CD8-positive, alpha-beta T cell (primary cell): ENCODE measurements at regions of chr11 and their contacts with region 1.

Region 1: GRCh38 chr11:59680287-59681154 is 11.7 kb upstream of the PATL1 start:
- DNase-seq: peak; percentile 23 to 75 (median 54)
- ATAC-seq: peak; percentile 91
- H3K4me3 ChIP-seq: no peak overlapping the region
- H3K4me3 Mint-ChIP-seq: no peak overlapping the region
- H3K27ac ChIP-seq: no peak overlapping the region
- H3K27ac Mint-ChIP-seq: no peak overlapping the region
- H3K4me1 ChIP-seq: no peaks in the 10 kb centered on the region
- H3K4me1 Mint-ChIP-seq: no peaks in the 10 kb centered on the region
- H3K27me3 ChIP-seq: no peaks in the 10 kb centered on the region
- H3K27me3 Mint-ChIP-seq: peaks cover 19% of the 10 kb centered on the region
- CTCF ChIP-seq: peak; percentile 41

Region 2: GRCh38 chr11:59534676-59535075 is 145.8 kb before region 1 on chr11:
- CTCF ChIA-PET with region 1: interaction called, 13 read pairs
- POLR2A ChIA-PET with region 1: no interaction called
- intact Hi-C with region 1: loop called (anchors 1 to 5 kb)
- DNase-seq: no peak
- ATAC-seq: no peak
- H3K4me3 ChIP-seq: no peak overlapping the region
- H3K4me3 Mint-ChIP-seq: no peak overlapping the region
- H3K27ac ChIP-seq: no peak overlapping the region
- H3K27ac Mint-ChIP-seq: no peak overlapping the region
- H3K4me1 ChIP-seq: peaks cover 7% of the 10 kb centered on the region
- H3K4me1 Mint-ChIP-seq: peaks cover 8% of the 10 kb centered on the region
- H3K27me3 ChIP-seq: no peaks in the 10 kb centered on the region
- H3K27me3 Mint-ChIP-seq: peaks cover 5% of the 10 kb centered on the region
- CTCF ChIP-seq: no peak

Region 3: GRCh38 chr11:59545179-59546020 is 135.1 kb before region 1 on chr11:
- CTCF ChIA-PET with region 1: interaction called, 10 read pairs
- POLR2A ChIA-PET with region 1: no interaction called
- intact Hi-C with region 1: no loop called
- DNase-seq: no peak
- ATAC-seq: no peak
- H3K4me3 ChIP-seq: no peak overlapping the region
- H3K4me3 Mint-ChIP-seq: no peak overlapping the region
- H3K27ac ChIP-seq: no peak overlapping the region
- H3K27ac Mint-ChIP-seq: no peak overlapping the region
- H3K4me1 ChIP-seq: peaks cover 4% of the 10 kb centered on the region
- H3K4me1 Mint-ChIP-seq: peaks cover 8% of the 10 kb centered on the region
- H3K27me3 ChIP-seq: no peaks in the 10 kb centered on the region
- H3K27me3 Mint-ChIP-seq: no peaks in the 10 kb centered on the region
- CTCF ChIP-seq: no peak

Region 4: DNA sequence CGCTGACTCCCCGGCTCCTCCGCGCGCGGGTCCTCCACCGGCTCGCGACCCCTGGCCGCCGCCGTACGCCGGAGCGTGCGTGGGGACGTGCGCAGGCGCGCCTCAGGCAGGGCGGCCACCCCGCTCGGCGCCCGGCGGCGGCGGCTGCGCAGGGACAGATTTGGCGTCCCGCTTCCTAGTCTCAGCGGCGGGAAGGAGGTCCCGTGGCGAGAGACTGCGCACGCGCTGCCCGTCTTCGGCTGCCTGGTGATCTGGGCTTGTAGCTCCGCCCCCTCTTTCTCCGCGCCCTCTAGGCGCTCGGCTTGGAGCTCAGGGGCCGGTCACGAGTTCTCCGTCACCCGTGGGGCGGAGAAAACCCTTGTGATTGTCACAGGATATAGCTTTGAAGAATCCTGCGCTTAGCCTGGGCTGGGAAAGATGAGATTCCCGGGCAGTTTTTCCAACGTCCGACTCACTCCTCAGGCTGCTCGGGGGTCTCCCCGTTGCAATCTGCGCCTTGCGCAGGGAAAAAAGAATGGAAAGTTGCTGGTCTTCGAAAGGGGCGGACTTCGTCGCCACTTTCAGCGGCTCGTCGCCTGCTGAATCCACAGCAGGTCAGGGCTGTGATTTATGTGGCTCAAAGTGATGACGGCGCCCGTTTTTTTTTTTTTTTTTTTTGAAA is 11.4 kb before region 1 on chr11 and contains the start of gene PATL1:
- CTCF ChIA-PET with region 1: interaction called, 12 read pairs
- POLR2A ChIA-PET with region 1: interaction called, 3 read pairs
- intact Hi-C with region 1: no loop called
- DNase-seq: peak; percentile 98 to 100 (median 99)
- ATAC-seq: peak; percentile 88
- H3K4me3 ChIP-seq: peak within 1 kb of the TSS; percentile 79 to 98
- H3K4me3 Mint-ChIP-seq: peak within 1 kb of the TSS; percentile 98
- H3K27ac ChIP-seq: peak within 1 kb of the TSS; percentile 98 to 99
- H3K27ac Mint-ChIP-seq: peak within 1 kb of the TSS; percentile 100
- H3K4me1 ChIP-seq: peaks cover 22% of the 10 kb centered on the region
- H3K4me1 Mint-ChIP-seq: peaks cover 43% of the 10 kb centered on the region
- H3K27me3 ChIP-seq: no peaks in the 10 kb centered on the region
- H3K27me3 Mint-ChIP-seq: no peaks in the 10 kb centered on the region
- CTCF ChIP-seq: no peak
- total RNA-seq, gene PATL1: 59.5 to 59.6 TPM

Region 5: GRCh38 chr11:59706518-59707285 is 26.2 kb after region 1 on chr11:
- CTCF ChIA-PET with region 1: no interaction called
- POLR2A ChIA-PET with region 1: no interaction called
- intact Hi-C with region 1: no loop called
- DNase-seq: no peak
- ATAC-seq: no peak
- H3K4me3 ChIP-seq: no peak overlapping the region
- H3K4me3 Mint-ChIP-seq: no peak overlapping the region
- H3K27ac ChIP-seq: no peak overlapping the region
- H3K27ac Mint-ChIP-seq: no peak overlapping the region
- H3K4me1 ChIP-seq: no peaks in the 10 kb centered on the region
- H3K4me1 Mint-ChIP-seq: no peaks in the 10 kb centered on the region
- H3K27me3 ChIP-seq: no peaks in the 10 kb centered on the region
- H3K27me3 Mint-ChIP-seq: peaks cover 36% of the 10 kb centered on the region
- CTCF ChIP-seq: no peak

Region 6: DNA sequence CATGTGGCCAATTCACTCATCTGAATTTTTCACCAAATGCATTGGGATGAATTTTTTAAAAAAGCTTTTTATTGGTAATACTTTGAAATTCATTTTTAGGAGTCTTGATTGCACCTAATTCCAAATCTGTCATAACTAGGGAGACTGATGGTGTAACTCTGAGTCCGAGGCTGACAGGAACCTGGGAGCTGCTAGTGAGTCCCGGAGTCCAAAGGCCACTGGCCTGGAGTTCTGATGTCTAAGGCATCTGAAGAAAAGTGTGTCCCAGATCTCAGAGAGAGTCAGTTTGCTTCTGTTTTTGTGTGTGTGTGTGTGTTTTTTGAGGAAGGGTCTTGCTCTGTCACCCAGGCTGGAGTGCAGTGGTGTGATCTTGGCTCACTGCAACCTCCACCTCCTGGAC is 50.6 kb after region 1 on chr11:
- CTCF ChIA-PET with region 1: no interaction called
- POLR2A ChIA-PET with region 1: no interaction called
- intact Hi-C with region 1: no loop called
- DNase-seq: no peak
- ATAC-seq: no peak
- H3K4me3 ChIP-seq: no peak overlapping the region
- H3K4me3 Mint-ChIP-seq: no peak overlapping the region
- H3K27ac ChIP-seq: no peak overlapping the region
- H3K27ac Mint-ChIP-seq: no peak overlapping the region
- H3K4me1 ChIP-seq: no peaks in the 10 kb centered on the region
- H3K4me1 Mint-ChIP-seq: no peaks in the 10 kb centered on the region
- H3K27me3 ChIP-seq: no peaks in the 10 kb centered on the region
- H3K27me3 Mint-ChIP-seq: peaks cover 2% of the 10 kb centered on the region
- CTCF ChIP-seq: no peak

Region 7: DNA sequence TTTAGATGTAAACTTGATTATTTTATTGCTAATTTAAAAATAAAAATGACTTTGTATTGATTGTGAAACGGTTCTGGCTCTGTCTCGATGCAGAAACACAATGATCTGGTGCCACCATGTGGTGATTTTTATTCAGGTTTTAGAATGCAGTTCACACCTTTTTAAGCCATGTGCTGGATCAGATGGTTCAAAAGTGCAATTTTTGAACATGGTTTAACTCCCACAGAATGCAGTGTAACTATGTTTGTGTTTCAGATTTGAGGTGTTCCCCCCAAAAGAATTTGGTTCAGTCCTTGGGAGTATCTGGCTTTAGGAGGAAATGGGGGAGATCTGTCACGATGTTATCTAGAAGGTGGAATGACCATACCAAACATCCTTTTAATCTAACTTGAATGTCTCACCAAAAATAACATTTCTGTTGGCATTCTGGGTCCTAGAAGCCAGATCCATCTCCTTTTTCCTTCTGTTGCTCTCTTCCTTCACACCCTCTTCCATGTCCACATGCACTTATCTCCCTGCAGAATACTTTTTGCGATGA is 122.2 kb after region 1 on chr11:
- CTCF ChIA-PET with region 1: interaction called, 3 read pairs
- POLR2A ChIA-PET with region 1: interaction called, 3 read pairs
- intact Hi-C with region 1: loop called in 1 of 2 experiments (anchors 5 kb)
- DNase-seq: peak in 6 of 9 experiments; percentile 26 to 78 (median 42)
- ATAC-seq: peak; percentile 70
- H3K4me3 ChIP-seq: no peak overlapping the region
- H3K4me3 Mint-ChIP-seq: no peak overlapping the region
- H3K27ac ChIP-seq: no peak overlapping the region
- H3K27ac Mint-ChIP-seq: no peak overlapping the region
- H3K4me1 ChIP-seq: no peaks in the 10 kb centered on the region
- H3K4me1 Mint-ChIP-seq: no peaks in the 10 kb centered on the region
- H3K27me3 ChIP-seq: no peaks in the 10 kb centered on the region
- H3K27me3 Mint-ChIP-seq: no peaks in the 10 kb centered on the region
- CTCF ChIP-seq: peak; percentile 72